Esophagus muscularis mucosa (tissue), 4 donors: ENCODE measurements at regions of chr11 and their contacts with region 1.

Region 1: DNA sequence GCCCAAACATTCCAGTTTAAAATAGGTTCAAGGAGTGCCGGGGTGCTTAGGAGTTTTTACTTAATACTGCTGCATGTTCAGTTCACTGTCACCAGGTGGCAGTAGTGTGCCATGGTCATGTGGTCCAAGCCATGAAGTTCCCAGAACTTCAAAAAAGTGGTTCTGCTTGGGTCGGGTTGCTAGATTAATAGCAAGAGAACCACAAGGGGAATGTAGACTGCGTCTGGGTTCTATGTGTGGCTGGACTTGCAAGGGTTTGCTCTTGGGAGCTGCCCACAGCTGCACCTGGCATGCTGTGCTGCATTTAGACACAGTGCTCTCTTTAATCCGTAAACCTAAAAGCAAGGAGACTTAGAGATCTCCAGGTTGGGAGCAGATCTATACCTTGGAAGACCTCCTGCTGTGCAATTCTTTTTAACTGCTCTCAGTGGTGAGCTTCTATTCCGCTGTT is 6.5 kb upstream of the SPON1 start:
- DNase-seq: no peak
- H3K4me3 ChIP-seq: no peak overlapping the region
- H3K27ac ChIP-seq: no peak overlapping the region
- H3K4me1 ChIP-seq: peaks cover 0 to 4% (median 2%) of the 10 kb centered on the region in 4 donors
- H3K27me3 ChIP-seq: peaks cover 0 to 8% (median 0%) of the 10 kb centered on the region in 4 donors
- CTCF ChIP-seq: peak; percentile 87 to 91 (median 91)
- EP300 ChIP-seq: no peak
- POLR2A ChIP-seq: no peak

Region 2: GRCh38 chr11:13525257-13525656 is 430.7 kb before region 1 on chr11:
- intact Hi-C with region 1: no loop called
- DNase-seq: no peak
- H3K4me3 ChIP-seq: no peak overlapping the region
- H3K27ac ChIP-seq: no peak overlapping the region
- H3K4me1 ChIP-seq: no peaks in the 10 kb centered on the region
- H3K27me3 ChIP-seq: no peaks in the 10 kb centered on the region
- CTCF ChIP-seq: no peak
- EP300 ChIP-seq: no peak
- POLR2A ChIP-seq: no peak

Region 3: DNA sequence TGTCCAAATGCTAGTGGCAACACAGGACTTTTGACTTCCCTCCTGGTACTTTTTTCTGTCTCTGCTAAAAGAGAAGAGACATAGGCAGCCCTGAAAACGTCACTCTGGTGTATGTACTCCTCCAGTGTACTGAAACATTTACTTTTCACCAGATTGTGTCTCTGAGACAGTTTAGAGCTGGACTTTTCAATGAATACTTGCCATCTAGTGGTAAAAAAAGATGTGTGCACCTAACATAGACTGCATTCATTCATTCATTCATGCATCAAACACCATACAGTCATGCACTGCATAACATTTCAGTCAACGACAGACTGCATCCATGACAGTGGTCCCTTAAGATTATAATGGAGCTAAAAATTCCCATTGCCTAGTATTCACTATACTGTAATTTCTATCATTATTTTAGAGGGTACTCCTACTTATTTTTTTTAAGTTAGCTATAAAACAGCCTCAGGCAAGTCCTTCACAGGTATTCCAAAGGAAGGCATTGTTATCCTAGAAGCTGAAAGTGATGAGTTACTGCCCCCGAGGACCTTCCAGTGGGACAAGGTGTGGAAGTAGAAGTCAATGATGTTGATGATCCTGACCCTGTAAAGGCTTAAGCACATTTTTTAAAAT is 192.8 kb after region 1 on chr11:
- intact Hi-C with region 1: loop called (anchors 1 kb)
- DNase-seq: no peak
- H3K4me3 ChIP-seq: no peak overlapping the region
- H3K27ac ChIP-seq: no peak overlapping the region
- H3K4me1 ChIP-seq: no peaks in the 10 kb centered on the region
- H3K27me3 ChIP-seq: no peaks in the 10 kb centered on the region
- CTCF ChIP-seq: peak; percentile 63 to 68 (median 65)
- EP300 ChIP-seq: no peak
- POLR2A ChIP-seq: no peak

Region 4: GRCh38 chr11:14288189-14288935 is 332.4 kb after region 1 on chr11:
- intact Hi-C with region 1: no loop called
- DNase-seq: no peak
- H3K4me3 ChIP-seq: no peak overlapping the region
- H3K27ac ChIP-seq: peak overlapping the region in 1 of 4 donors; percentile 7
- H3K4me1 ChIP-seq: peaks cover 0 to 11% (median 0%) of the 10 kb centered on the region in 4 donors
- H3K27me3 ChIP-seq: no peaks in the 10 kb centered on the region
- CTCF ChIP-seq: no peak
- EP300 ChIP-seq: no peak
- POLR2A ChIP-seq: no peak